Activated CD4-positive, alpha-beta T cell treated with anti-CD3 and anti-CD28 coated beads for 36 hours (primary cell): ENCODE measurements at regions of chr2 and their contacts with region 1.

Region 1: GRCh38 chr2:16773080-16773713 is 107.6 kb upstream of the CYRIA start:
- DNase-seq: peak; percentile 57
- ATAC-seq: peak; percentile 74
- H3K4me3 Mint-ChIP-seq: no peak overlapping the region
- H3K27ac Mint-ChIP-seq: no peak overlapping the region
- H3K4me1 Mint-ChIP-seq: no peaks in the 10 kb centered on the region
- H3K27me3 Mint-ChIP-seq: peaks cover 17% of the 10 kb centered on the region

Region 2: DNA sequence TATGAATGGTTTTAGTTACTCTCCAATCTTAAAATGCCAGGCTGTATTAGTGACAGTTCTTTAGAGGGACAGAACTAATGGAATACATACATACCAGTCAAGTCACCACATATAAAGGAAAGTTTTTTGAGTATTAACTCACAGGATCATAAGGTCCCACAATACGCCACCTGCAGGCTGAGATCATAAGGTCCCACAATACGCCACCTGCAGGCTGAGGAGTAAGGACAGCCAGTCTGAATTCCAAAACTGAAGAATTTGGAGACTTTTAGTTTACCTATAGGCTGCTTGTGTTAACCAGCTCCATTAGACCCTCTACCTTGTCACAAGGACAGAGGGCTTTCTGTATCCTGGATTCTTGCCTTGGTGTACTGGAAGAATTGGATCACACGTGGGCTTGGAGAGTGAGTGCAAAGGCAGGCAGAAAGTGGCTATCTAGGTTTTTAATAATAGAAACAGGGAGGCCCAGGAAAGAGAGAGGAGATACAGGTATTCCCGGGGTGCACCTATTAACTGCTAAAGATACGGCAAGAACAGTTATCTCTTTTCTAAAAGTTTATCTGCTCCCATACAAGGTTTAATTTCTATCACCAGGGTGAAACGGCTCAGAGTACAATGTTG is 127.3 kb after region 1 on chr2:
- CTCF ChIA-PET with region 1: no interaction called
- POLR2A ChIA-PET with region 1: no interaction called
- intact Hi-C with region 1: loop called in 1 of 2 experiments (anchors 1 kb)
- DNase-seq: peak; percentile 46
- ATAC-seq: peak; percentile 39
- H3K4me3 Mint-ChIP-seq: no peak overlapping the region
- H3K27ac Mint-ChIP-seq: no peak overlapping the region
- H3K4me1 Mint-ChIP-seq: no peaks in the 10 kb centered on the region
- H3K27me3 Mint-ChIP-seq: no peaks in the 10 kb centered on the region

Region 3: GRCh38 chr2:17309741-17310339 is 536.6 kb after region 1 on chr2:
- CTCF ChIA-PET with region 1: interaction called, 3 read pairs
- POLR2A ChIA-PET with region 1: no interaction called
- intact Hi-C with region 1: loop called in 1 of 2 experiments (anchors 1 kb)
- DNase-seq: peak; percentile 21
- ATAC-seq: no peak
- H3K4me3 Mint-ChIP-seq: no peak overlapping the region
- H3K27ac Mint-ChIP-seq: no peak overlapping the region
- H3K4me1 Mint-ChIP-seq: peaks cover 6% of the 10 kb centered on the region
- H3K27me3 Mint-ChIP-seq: peaks cover 12% of the 10 kb centered on the region

Region 4: GRCh38 chr2:17804358-17804757 is 1031.2 kb after region 1 on chr2:
- CTCF ChIA-PET with region 1: no interaction called
- POLR2A ChIA-PET with region 1: no interaction called
- intact Hi-C with region 1: no loop called
- DNase-seq: no peak
- ATAC-seq: no peak
- H3K4me3 Mint-ChIP-seq: no peak overlapping the region
- H3K27ac Mint-ChIP-seq: no peak overlapping the region
- H3K4me1 Mint-ChIP-seq: no peaks in the 10 kb centered on the region
- H3K27me3 Mint-ChIP-seq: peaks cover 9% of the 10 kb centered on the region

Region 5: GRCh38 chr2:18378020-18378653 is 1604.9 kb after region 1 on chr2:
- CTCF ChIA-PET with region 1: no interaction called
- POLR2A ChIA-PET with region 1: no interaction called
- intact Hi-C with region 1: loop called in 1 of 2 experiments (anchors 10 kb)
- DNase-seq: peak; percentile 39
- ATAC-seq: peak; percentile 55
- H3K4me3 Mint-ChIP-seq: no peak overlapping the region
- H3K27ac Mint-ChIP-seq: no peak overlapping the region
- H3K4me1 Mint-ChIP-seq: no peaks in the 10 kb centered on the region
- H3K27me3 Mint-ChIP-seq: peaks cover 4% of the 10 kb centered on the region